Common myeloid progenitor, CD34-positive (primary cell): ENCODE measurements at regions of chr17 and their contacts with region 1.

Region 1: GRCh38 chr17:43316522-43317142 is 82.2 kb upstream of the ARL4D start:
- DNase-seq: peak; percentile 39 to 84 (median 74)
- H3K4me3 ChIP-seq: no peak overlapping the region
- H3K27ac ChIP-seq: no peak overlapping the region
- H3K4me1 ChIP-seq: peaks cover 0 to 6% (median 1%) of the 10 kb centered on the region in 4 experiments
- H3K27me3 ChIP-seq: no peaks in the 10 kb centered on the region

Region 2: DNA sequence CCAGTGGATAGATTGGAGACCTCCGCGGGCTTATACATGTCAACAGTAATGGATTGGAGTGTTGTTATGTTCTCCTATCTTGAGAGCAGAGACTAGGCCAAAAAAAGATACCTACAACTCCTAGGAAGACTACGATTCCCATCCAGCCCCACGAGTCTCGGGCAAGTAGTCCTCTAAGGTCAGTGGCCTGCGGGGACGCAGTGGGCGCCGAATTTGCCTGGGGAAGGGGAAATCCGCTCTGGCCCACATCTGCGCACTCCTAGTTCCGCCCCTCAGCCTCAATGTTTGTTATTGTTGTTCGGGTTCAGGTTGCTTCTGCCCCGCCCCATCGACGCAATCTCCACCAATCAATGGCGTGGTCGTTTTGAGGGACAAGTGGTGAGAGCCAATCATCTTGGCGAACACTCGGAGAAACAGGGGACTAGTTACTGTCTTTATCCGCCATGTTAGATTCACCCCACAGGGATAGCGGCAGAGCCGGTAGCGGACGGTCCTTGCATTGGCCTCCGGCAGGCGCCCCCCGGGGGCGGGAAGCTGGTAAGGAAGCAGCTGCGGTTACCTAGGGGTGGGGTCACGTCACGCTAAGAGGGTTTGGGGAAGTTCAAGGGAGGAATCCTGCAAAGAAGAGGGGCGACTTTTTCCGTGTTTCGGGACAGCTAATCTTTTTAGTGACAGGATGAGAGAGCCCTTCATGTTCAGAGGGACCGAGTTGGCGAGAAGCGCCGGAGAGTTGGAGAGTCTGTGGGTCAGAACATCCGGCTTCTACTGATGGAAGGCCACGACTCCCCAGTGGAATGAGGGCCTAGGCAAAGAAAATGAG is 145.7 kb before region 1 on chr17 and contains the start of gene NBR1:
- CTCF ChIA-PET with region 1: interaction called, 3 read pairs
- POLR2A ChIA-PET with region 1: interaction called, 15 read pairs
- DNase-seq: peak; percentile 99 to 100 (median 100)
- H3K4me3 ChIP-seq: peak within 1 kb of the TSS; percentile 60 to 98 (median 86)
- H3K27ac ChIP-seq: peak within 1 kb of the TSS; percentile 99 to 100
- H3K4me1 ChIP-seq: peaks cover 12 to 48% (median 31%) of the 10 kb centered on the region in 4 experiments
- H3K27me3 ChIP-seq: no peaks in the 10 kb centered on the region

Region 3: DNA sequence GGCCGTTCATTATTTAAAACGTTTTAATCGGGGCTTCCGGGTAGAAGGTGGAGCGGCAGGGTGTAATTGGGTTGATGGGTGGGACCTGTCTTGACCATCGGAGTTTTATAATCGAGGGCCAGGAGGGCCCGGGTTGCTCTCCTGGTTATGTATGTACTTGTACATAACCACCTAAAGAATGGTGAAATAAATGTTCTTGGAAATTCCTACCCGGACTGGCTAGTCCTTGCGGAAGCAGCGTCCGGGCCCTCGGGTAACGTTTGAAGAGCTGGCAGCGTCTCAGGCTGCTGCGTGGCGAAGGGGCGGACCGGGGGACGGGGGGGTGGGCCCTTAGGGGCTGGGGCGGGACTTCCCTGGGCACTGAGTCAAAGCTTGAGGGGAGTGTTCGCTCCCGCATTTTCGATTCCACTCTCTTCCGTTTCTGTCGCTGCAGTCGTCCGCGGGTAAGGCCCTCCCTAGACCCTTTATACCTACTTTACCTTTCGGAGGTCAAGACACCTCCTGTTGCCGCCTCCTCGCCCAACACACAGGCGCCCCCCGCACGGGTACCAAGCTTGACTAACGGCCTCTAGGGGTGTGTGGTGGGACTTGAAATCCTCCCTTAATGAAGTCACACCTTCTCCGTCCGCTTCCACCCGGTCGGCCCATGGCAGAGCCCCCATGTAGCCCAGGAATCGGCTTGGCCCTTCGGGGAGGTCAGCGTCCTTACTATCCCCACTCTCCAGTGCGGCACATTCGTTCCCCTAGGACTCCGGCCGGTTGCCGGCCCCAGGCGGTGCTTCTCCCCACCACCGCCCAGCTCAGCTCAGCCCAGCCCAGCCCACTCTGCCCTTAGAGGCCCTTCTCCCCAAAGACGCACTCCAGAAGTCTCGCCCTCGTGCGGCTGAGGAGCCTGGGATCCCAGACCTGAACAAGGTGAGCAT is 104.9 kb before region 1 on chr17 and contains the start of gene TMEM106A:
- CTCF ChIA-PET with region 1: interaction called, 6 read pairs
- POLR2A ChIA-PET with region 1: interaction called, 51 read pairs
- DNase-seq: peak; percentile 75 to 86 (median 78)
- H3K4me3 ChIP-seq: peak within 1 kb of the TSS; percentile 82 to 94 (median 85)
- H3K27ac ChIP-seq: peak within 1 kb of the TSS; percentile 66 to 87
- H3K4me1 ChIP-seq: peaks cover 21 to 35% (median 28%) of the 10 kb centered on the region in 4 experiments
- H3K27me3 ChIP-seq: no peaks in the 10 kb centered on the region

Region 4: DNA sequence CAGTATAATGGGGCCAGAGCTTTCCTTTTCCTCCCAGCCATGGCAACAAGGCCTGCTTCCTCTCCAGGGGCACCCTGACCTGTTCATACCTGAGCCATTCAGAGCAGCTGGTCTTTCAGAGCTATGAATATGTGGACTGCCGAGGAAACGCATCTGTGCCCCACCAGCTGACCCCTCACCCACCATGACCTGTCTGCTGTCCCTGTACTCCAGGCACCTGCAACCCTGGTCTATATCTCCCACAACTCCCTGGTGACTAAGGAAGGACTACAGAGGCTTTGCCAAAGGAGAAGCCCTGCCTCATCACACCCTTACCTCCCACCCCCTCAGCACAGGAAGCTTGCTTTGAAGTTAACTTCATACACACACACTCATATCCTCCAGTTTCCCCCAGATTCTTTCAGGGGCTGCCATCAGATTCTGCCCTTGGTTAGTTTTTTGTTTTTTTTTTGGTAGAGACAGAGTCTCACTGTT is 99.0 kb before region 1 on chr17:
- CTCF ChIA-PET with region 1: interaction called, 3 read pairs
- POLR2A ChIA-PET with region 1: interaction called, 51 read pairs
- DNase-seq: no peak
- H3K4me3 ChIP-seq: no peak overlapping the region
- H3K27ac ChIP-seq: no peak overlapping the region
- H3K4me1 ChIP-seq: peaks cover 8 to 19% (median 15%) of the 10 kb centered on the region in 4 experiments
- H3K27me3 ChIP-seq: no peaks in the 10 kb centered on the region

Region 5: DNA sequence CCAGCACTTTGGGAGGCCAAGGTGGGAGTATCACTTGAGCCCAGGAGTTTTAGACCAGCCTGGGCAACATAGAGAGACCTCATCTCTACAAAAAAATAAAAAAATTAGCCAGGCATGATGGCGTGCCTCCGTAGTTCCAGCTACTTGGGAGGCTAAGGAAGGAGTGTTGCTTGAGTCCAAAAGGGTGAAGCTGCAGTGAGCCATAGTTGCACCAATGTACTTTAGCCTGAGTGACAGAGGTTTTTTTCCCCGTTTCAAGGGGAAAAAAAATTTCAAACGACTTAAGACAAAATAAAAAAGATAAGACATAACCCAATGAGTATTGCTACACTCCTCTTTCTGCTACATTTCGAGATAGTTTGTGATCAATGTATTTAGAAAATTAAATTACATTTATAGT is 174.0 kb after region 1 on chr17:
- CTCF ChIA-PET with region 1: no interaction called
- POLR2A ChIA-PET with region 1: no interaction called
- DNase-seq: no peak
- H3K4me3 ChIP-seq: no peak overlapping the region
- H3K27ac ChIP-seq: no peak overlapping the region
- H3K4me1 ChIP-seq: peaks cover 0 to 4% (median 0%) of the 10 kb centered on the region in 4 experiments
- H3K27me3 ChIP-seq: no peaks in the 10 kb centered on the region